Mucosa of descending colon (tissue), 3 donors: ENCODE measurements at regions of chr19 and their contacts with region 1.

Region 1: GRCh38 chr19:7340959-7341837 is 7.5 kb upstream of the ARHGEF18 start:
- DNase-seq: peak; percentile 84 to 92 (median 91)
- ATAC-seq: peak; percentile 65
- H3K4me3 ChIP-seq: no peak overlapping the region
- H3K4me1 ChIP-seq: peaks cover 12% of the 10 kb centered on the region
- CTCF ChIP-seq: peak; percentile 91

Region 2: DNA sequence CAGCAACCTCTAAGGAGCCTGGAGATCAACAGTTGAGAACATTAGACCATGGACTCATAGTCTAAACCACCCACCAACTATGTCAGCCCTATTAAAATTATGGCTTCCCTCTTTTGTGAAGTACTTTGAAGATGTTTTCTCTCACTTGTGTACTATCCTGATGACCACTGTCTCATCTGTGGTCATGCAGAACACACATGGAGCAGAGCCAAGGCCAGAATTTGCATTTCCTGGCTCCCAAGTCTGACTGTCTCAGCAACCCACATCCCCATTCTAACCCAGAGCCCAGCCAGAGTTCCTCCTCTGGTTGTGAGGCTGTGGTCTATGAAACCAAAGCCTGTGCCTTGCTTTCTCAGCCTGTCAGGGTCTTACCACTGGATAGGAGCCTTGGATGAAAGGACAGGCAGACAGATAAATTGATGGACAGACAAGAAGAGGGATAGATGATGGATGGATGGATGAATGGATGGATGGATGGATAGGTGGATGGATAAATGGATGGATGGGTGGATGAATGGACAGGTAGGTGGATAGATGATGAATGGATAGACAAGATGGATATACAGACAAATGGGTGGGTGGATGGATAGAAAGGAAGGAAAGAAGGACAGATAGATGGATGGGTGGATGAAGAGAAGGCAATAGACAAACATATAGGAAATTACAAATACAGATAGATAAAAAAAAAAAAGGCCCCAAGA is 236.3 kb before region 1 on chr19:
- intact Hi-C with region 1: loop called (anchors 2 to 5 kb)
- DNase-seq: peak in 1 of 3 donors; percentile 21
- ATAC-seq: no peak
- H3K4me3 ChIP-seq: no peak overlapping the region
- H3K4me1 ChIP-seq: peaks cover 8% of the 10 kb centered on the region
- CTCF ChIP-seq: no peak

Region 3: DNA sequence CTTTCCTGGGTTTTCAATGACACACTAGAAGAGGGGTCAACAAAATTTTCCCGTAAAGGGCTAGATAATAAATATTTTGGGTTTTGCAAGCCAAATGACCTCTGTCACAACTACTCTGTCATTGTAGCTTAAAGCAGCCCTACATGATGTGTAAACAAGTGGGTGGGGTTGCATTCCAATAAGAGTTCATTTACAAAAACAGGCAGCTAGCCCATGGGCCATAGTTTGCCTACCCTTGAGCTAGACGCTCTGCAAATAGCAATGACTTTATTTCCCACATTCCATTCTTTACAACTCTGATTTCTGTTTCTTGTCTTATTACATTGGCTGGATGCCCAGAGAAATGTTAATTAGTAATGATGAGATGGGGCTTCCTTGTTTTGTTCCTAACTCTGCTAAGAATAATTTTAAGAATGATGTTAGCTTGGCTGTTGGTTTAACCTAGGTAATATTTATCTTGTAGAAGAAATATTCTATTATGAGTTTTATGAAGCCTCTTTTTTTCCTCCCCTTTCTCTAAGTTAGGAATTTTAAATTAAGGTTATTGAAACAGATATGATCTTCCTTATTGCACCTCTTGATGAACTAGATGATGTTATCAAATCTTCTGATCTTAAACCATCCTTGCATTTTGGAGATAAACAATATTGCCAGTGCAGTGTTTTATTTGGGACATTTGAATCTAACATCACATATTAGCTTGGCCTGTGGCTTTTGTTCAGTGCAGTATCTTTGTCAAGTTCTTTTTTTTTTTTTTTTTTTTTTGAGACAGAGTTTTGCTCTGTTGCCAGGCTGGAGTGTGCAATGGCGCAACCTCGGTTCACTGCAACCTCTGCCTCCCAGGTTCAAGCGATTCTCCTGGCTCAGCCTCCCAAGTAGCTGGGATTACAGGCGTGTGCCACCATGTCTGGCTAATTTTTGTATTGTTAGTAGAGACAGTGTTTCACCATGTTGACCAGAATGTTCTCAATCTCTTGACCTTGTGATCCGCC is 195.4 kb before region 1 on chr19:
- intact Hi-C with region 1: loop called (anchors 5 to 10 kb)
- DNase-seq: peak in 1 of 3 donors; percentile 42
- ATAC-seq: peak; percentile 90
- H3K4me3 ChIP-seq: no peak overlapping the region
- H3K4me1 ChIP-seq: no peaks in the 10 kb centered on the region
- CTCF ChIP-seq: no peak

Region 4: DNA sequence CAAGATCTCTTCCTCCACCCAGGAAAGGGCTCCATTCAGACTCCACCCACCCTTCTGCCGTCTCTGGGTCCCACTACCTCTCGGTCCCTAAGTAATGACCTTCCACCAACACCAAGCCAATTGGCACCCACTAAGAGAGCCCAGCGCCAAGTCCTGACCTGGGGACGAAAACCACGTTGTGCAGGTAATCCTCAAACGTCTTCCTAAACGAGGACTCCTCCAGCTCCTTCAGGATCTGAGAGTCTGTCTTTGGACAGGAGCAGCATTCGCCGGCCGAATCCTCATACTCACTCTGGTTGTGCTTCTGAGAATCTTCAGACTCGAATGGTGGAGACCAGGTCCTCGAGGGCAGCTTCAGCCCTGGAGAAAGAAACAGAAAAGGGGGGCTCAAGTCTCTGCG is 188.6 kb before region 1 on chr19:
- intact Hi-C with region 1: loop called (anchors 5 to 10 kb)
- DNase-seq: no peak
- ATAC-seq: no peak
- H3K4me3 ChIP-seq: no peak overlapping the region
- H3K4me1 ChIP-seq: no peaks in the 10 kb centered on the region
- CTCF ChIP-seq: no peak